ENCODE measurements at regions of chr17 and their contacts with region 1.

Region 1: DNA sequence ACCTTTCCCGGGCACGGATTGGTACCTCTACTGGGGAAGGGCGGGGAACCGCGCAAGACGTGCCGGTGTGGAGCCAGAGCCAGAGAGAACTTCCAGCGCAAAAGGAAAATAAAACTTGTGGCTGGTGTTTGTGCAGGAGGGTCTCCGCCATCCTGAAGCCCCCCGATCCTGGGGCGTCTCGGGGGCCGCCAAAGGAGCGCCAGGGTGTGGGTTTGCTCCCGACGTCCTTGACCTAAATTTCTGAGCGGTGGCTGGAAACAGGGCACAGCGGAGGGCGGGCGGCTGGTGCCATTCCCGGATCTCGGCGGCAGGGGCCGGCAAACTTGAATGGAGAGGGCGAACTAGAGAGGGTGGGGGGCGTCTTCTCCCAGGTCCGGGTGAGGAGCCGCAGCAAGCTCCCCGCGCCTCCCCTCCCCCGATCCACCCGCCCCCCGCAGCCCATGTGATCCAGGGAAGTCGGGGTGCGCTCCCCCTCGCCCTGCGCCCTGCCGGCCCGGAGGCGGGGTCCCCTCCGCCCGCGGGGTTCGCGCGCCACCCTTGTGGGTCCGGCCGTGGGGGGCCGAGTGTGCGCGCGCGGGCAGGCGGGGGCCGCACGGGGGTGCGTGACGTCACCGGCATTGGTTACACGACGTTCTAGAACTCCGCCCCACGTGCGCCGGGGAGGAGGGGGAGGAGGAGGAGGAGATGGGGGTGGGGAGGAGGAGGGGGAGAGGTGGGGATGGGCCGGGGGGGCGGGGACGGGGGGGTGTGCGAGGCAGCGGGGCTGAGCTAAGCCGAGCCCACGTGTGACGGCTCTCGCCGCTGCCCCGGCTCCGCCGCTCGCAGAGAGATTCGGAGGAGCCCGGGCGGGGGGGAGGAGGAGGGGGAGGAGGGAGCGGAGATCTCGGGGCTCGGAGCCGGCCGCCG is at the start of gene MSI2:
- DNase-seq: peak; percentile 94 to 95
- ATAC-seq: peak; percentile 88 to 94 (median 92)
- H3K4me3 ChIP-seq: peak within 1 kb of the TSS; percentile 75 to 97 (median 93)
- H3K27ac ChIP-seq: peak within 1 kb of the TSS; percentile 88 to 99 (median 97)
- H3K4me1 ChIP-seq: peaks cover 0 to 38% (median 20%) of the 10 kb centered on the region in 9 donors
- H3K27me3 ChIP-seq: peaks cover 0 to 4% (median 0%) of the 10 kb centered on the region in 7 donors
- CTCF ChIP-seq: peak in 1 of 9 donors; percentile 5
- total RNA-seq, gene MSI2: 94.2 to 135 (median 121) TPM

Region 2: GRCh38 chr17:56908001-56908542 is 348.0 kb before region 1 on chr17:
- intact Hi-C with region 1: no loop called
- DNase-seq: peak; percentile 24 to 55
- ATAC-seq: peak in 6 of 8 donors; percentile 34 to 64 (median 42)
- H3K4me3 ChIP-seq: no peak overlapping the region
- H3K27ac ChIP-seq: peak overlapping the region in 3 of 10 donors; percentile 29 to 95 (median 43)
- H3K4me1 ChIP-seq: peaks cover 5 to 63% (median 42%) of the 10 kb centered on the region in 9 donors
- H3K27me3 ChIP-seq: no peaks in the 10 kb centered on the region
- CTCF ChIP-seq: no peak

Region 3: DNA sequence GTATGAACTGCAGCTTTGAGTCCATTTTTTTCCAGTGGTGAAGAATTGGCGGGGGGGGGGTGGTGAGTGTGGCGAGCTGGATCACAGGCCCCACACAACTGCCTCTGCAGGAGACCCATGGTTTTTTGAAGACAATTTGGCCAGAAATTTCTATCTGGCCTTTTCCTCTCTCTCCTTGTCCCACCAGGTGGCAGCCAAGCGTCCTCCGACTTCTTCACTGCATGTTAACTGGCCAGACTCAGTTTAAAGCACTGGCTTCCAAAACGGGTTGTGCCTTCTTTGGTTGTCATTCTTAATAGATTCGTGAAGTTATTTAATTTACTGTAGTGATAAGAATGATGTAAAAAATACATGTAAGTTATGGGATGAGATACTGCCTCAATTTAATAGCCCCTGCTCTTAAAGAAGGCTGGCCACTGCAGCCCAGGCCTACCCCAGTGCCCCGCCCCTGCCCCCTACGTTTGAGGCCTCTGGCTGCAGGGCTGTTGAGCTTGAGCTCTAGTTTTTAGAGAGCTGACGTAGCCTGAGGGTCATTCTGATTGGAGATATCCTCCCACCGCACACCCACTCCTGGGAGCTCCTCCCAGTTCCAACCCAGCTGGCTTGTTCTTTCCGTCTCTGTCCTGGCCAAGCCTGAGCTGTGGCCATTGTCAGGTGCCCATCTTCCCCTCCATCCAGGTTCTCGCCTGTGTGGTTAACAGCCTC is 134.5 kb before region 1 on chr17:
- intact Hi-C with region 1: loop called in 1 of 10 experiments (anchors 10 kb)
- DNase-seq: peak in 1 of 2 donors; percentile 29
- ATAC-seq: peak in 5 of 8 donors; percentile 40 to 59 (median 52)
- H3K4me3 ChIP-seq: no peak overlapping the region
- H3K27ac ChIP-seq: peak overlapping the region in 1 of 10 donors; percentile 4
- H3K4me1 ChIP-seq: peaks cover 0 to 14% (median 0%) of the 10 kb centered on the region in 9 donors
- H3K27me3 ChIP-seq: no peaks in the 10 kb centered on the region
- CTCF ChIP-seq: peak in 8 of 9 donors; percentile 17 to 60 (median 48)

Region 4: DNA sequence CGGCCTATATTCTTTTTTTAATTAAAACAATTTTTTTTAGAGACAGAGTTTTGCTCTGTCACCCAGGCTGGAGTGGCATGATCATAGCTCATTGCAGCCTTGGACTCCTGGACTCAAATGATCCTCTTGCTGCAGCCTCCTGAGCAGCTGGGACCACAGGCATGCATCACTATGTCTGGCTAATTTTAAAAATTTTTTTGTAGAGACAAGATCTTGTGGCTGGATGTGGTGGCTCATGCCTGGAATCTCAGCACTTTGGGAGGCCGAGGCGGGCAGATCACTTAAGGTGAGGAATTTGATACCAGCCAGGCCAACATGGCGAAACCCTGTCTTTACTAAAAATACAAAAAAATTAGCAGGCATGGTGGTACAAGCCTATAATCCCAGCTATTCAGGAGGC is 54.5 kb before region 1 on chr17:
- intact Hi-C with region 1: no loop called
- DNase-seq: no peak
- ATAC-seq: no peak
- H3K4me3 ChIP-seq: no peak overlapping the region
- H3K27ac ChIP-seq: no peak overlapping the region
- H3K4me1 ChIP-seq: no peaks in the 10 kb centered on the region
- H3K27me3 ChIP-seq: no peaks in the 10 kb centered on the region
- CTCF ChIP-seq: no peak

Region 5: DNA sequence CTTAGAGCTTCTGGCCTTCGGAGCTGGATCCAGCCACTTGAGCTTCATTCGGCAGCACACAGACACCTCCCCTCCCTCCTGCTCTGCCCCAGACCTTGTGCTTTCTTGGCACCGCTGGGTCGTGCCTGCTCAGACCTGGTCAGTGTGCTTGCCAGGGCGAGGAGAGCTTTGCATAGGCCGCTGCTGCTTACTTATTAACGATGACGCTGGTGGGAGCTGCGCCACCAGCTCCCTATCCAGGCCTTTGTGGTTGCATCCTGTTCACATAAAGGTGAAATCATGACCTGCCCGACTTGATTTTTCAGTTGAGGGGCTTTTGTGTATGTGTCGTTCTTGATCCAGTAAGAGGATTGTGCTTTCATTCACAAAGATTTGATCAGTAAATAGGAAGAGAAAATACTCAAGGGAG is 101.4 kb after region 1 on chr17:
- intact Hi-C with region 1: loop called in 1 of 10 experiments (anchors 5 kb)
- DNase-seq: peak; percentile 70 to 81
- ATAC-seq: peak; percentile 73 to 90 (median 84)
- H3K4me3 ChIP-seq: peak overlapping the region in 4 of 10 donors; percentile 12 to 28 (median 16)
- H3K27ac ChIP-seq: peak overlapping the region; percentile 61 to 90 (median 74)
- H3K4me1 ChIP-seq: peaks cover 3 to 79% (median 31%) of the 10 kb centered on the region in 9 donors
- H3K27me3 ChIP-seq: no peaks in the 10 kb centered on the region
- CTCF ChIP-seq: no peak

Region 6: DNA sequence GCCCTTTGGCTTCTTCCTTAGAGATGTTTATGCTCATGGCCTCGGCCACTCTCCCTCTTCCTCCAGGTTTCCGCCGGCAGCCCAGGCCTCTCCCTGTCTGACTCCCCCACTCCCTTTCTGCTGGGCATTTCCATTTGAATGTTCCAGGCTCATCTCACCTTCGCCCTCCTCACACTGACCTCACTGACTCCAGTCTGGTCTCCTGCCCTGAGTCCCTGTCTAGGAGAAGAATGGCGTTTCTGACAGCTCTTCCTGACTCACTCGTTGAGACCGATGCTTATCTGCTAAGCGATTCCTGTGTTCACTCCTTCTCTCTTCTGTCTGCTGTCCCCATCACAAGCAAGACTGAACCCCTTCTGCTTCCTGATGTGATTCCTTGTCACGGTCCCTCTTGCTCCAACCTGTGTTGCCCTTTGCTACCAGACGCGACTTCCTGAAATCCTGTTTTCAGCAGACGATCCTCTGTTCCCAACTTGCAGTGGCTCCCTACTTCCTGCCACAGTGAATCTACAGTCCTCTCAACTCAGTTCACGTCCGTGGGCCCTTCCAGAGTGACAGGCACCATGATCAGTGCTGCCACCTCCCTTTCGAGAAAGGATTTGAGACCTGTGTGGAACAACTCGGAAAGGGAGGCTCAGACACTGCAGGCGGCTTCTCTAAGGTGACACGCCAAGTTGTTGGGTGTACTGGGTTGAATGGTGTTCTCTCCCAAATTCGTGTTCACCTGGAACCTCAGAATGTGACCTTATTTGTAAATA is 176.7 kb after region 1 on chr17:
- intact Hi-C with region 1: loop called in 2 of 10 experiments (anchors 10 kb)
- DNase-seq: no peak
- ATAC-seq: no peak
- H3K4me3 ChIP-seq: no peak overlapping the region
- H3K27ac ChIP-seq: no peak overlapping the region
- H3K4me1 ChIP-seq: peaks cover 0 to 13% (median 1%) of the 10 kb centered on the region in 9 donors
- H3K27me3 ChIP-seq: no peaks in the 10 kb centered on the region
- CTCF ChIP-seq: peak in 1 of 9 donors; percentile 10

Region 7: GRCh38 chr17:57455063-57455914 is 199.3 kb after region 1 on chr17:
- intact Hi-C with region 1: no loop called
- DNase-seq: no peak
- ATAC-seq: peak in 6 of 8 donors; percentile 20 to 38 (median 28)
- H3K4me3 ChIP-seq: no peak overlapping the region
- H3K27ac ChIP-seq: peak overlapping the region in 9 of 10 donors; percentile 25 to 80 (median 56)
- H3K4me1 ChIP-seq: peaks cover 0 to 67% (median 39%) of the 10 kb centered on the region in 9 donors
- H3K27me3 ChIP-seq: no peaks in the 10 kb centered on the region
- CTCF ChIP-seq: no peak

Region 8: GRCh38 chr17:57499648-57500049 is 243.6 kb after region 1 on chr17:
- intact Hi-C with region 1: loop called in 1 of 10 experiments (anchors 10 kb)
- DNase-seq: no peak
- ATAC-seq: no peak
- H3K4me3 ChIP-seq: no peak overlapping the region
- H3K27ac ChIP-seq: no peak overlapping the region
- H3K4me1 ChIP-seq: peaks cover 0 to 32% (median 13%) of the 10 kb centered on the region in 9 donors
- H3K27me3 ChIP-seq: no peaks in the 10 kb centered on the region
- CTCF ChIP-seq: no peak

Region 9: DNA sequence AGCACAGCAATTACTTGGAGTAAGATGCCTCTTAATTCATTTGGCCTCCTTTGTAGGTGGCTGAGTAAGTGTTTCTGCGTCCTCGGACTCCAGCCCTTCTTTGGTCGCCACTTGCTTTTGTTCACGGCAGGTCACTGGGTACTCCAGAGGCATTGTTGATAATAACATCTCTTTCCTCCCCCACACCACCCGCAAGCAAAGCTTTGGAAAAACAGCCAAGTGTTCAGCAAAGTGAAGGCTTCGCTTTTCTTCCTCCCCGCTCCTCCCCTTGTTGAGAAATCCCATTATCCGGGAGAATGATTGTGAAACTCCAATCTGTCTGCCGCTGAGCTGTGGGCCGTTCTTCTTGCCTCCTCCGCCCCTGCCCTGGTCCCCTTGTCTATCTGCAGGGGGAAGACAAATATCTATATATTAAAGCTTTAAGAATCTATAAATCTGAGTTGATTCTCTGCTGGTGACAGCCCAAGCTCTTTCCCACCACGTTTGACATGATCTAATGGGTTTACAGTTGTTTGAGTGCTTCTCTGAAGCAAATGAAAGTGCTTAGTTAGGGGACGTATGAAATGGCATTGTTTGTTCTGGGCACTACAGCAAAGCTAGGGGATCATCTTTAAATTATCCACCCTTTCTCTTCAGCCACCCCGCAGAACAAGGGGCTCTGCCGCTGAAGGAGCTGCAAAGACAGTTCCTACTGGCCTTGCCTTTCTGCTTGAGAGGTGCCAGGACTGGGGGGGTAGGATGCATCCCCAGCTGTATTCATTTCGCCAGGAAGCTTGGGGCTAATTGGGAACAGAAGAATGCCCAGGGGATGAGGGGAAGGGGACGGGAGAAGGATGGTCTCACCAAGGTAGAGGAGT is 321.9 kb after region 1 on chr17:
- intact Hi-C with region 1: loop called in 1 of 10 experiments (anchors 10 kb)
- DNase-seq: peak in 1 of 2 donors; percentile 40
- ATAC-seq: peak in 7 of 8 donors; percentile 31 to 74 (median 59)
- H3K4me3 ChIP-seq: peak overlapping the region in 5 of 10 donors; percentile 22 to 39 (median 26)
- H3K27ac ChIP-seq: peak overlapping the region in 9 of 10 donors; percentile 37 to 78 (median 61)
- H3K4me1 ChIP-seq: peaks cover under 1 to 45% (median 32%) of the 10 kb centered on the region in 9 donors
- H3K27me3 ChIP-seq: no peaks in the 10 kb centered on the region
- CTCF ChIP-seq: no peak

Region 10: GRCh38 chr17:57662644-57663308 is 406.7 kb after region 1 on chr17:
- intact Hi-C with region 1: loop called in 3 of 10 experiments (anchors 5 to 10 kb)
- DNase-seq: peak; percentile 97 to 98
- ATAC-seq: peak; percentile 97 to 99 (median 98)
- H3K4me3 ChIP-seq: peak overlapping the region in 8 of 10 donors; percentile 2 to 58 (median 44)
- H3K27ac ChIP-seq: peak overlapping the region; percentile 44 to 93 (median 87)
- H3K4me1 ChIP-seq: peaks cover 5 to 61% (median 26%) of the 10 kb centered on the region in 9 donors
- H3K27me3 ChIP-seq: no peaks in the 10 kb centered on the region
- CTCF ChIP-seq: peak in 2 of 9 donors; percentile 23 to 25

Measured in heart right ventricle (tissue), 16 donors.